ENCODE measurements at regions of chr11 and their contacts with region 1.

Region 1: DNA sequence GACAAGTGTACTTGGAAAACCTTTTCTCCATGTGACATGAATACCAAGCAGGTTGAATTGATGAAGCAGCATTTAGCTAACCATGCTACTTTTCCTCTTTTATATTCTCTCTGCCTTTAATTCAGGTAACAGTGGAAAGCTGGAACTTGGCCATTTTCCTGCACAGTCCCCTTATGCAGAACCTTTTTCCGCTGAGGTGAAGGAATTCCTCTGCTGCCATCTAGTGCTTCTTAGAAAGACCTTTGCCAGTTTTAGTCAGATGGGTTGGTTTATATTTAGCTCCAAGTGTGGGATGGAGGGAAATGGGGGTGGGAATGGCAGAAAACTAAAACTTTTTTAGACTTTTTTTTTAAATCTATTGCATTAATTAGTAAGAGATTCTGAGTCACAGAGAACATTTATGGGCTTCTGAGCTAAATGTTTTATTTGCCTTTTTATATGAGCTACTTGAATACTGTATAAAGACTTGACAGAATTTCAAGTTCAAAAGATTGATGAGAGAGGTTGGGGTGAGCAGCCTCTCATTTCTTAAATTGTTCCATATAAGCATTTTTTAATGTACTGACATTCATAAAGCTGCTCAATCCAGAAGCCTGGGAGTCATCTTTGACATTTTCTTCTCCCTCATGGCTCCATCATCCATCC is 153.9 kb upstream of the ZC3H12C start:
- DNase-seq: peak; percentile 50
- H3K4me3 ChIP-seq: peak overlapping the region in 1 of 2 experiments; percentile 16; a peak in 1 of 4 replicates
- H3K27ac ChIP-seq: no peak overlapping the region
- H3K4me1 ChIP-seq: no peaks in the 10 kb centered on the region
- H3K27me3 ChIP-seq: no peaks in the 10 kb centered on the region
- CTCF ChIP-seq: peak; percentile 78
- EP300 ChIP-seq: no peak
- RAD21 ChIP-seq: peak; percentile 93

Region 2: GRCh38 chr11:109853156-109853776 is 86.0 kb before region 1 on chr11:
- CTCF ChIA-PET with region 1: interaction called, 11 read pairs
- POLR2A ChIA-PET with region 1: no interaction called
- DNase-seq: no peak
- H3K4me3 ChIP-seq: no peak overlapping the region; a peak in 1 of 4 replicates
- H3K27ac ChIP-seq: no peak overlapping the region
- H3K4me1 ChIP-seq: peaks cover 0 to 2% of the 10 kb centered on the region in 2 experiments; a peak in 2 of 4 replicates
- H3K27me3 ChIP-seq: no peaks in the 10 kb centered on the region
- CTCF ChIP-seq: peak; percentile 79
- EP300 ChIP-seq: no peak
- RAD21 ChIP-seq: peak; percentile 74

Measured in SK-N-SH (cell line).